ENCODE measurements at regions of chr11 and their contacts with region 1.

Region 1: GRCh38 chr11:72430741-72431570 is 3.4 kb downstream of the CLPB start:
- DNase-seq: no peak
- ATAC-seq: peak in 4 of 8 donors; percentile 12 to 37 (median 33)
- H3K4me3 ChIP-seq: no peak overlapping the region
- H3K27ac ChIP-seq: no peak overlapping the region
- H3K4me1 ChIP-seq: peaks cover 0 to 41% (median 21%) of the 10 kb centered on the region in 9 donors
- H3K27me3 ChIP-seq: no peaks in the 10 kb centered on the region
- CTCF ChIP-seq: peak; percentile 39 to 83 (median 75)

Region 2: DNA sequence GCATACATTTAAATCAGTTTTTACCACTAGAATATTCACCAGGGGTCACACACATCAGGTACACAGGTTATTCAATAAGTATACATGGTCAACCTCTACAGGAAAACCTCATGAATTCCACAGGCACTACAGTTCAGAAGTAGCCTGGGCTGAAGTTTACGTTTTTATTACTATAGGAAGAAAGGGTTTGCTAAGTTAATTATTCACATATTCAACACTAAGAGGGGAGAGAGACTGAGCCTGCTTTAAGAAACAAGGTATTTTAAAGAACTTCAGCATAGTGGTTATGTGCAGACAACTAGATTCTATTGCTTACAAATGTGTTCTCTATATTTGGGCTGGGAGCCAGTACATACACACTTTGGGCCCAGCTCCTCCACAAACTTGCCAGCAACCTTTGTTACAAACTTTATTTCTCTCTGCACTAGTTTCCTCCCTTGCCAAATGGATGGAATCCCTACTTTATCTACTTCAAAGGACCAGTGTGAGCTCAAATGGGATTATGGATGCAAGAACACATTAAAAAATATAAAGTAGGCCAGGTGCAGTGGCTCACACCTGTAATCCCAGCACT is 400.4 kb before region 1 on chr11:
- intact Hi-C with region 1: loop called in 1 of 10 experiments (anchors 10 kb)
- DNase-seq: no peak
- ATAC-seq: no peak
- H3K4me3 ChIP-seq: no peak overlapping the region
- H3K27ac ChIP-seq: no peak overlapping the region
- H3K4me1 ChIP-seq: peaks cover 5 to 95% (median 61%) of the 10 kb centered on the region in 9 donors
- H3K27me3 ChIP-seq: no peaks in the 10 kb centered on the region
- CTCF ChIP-seq: no peak

Region 3: DNA sequence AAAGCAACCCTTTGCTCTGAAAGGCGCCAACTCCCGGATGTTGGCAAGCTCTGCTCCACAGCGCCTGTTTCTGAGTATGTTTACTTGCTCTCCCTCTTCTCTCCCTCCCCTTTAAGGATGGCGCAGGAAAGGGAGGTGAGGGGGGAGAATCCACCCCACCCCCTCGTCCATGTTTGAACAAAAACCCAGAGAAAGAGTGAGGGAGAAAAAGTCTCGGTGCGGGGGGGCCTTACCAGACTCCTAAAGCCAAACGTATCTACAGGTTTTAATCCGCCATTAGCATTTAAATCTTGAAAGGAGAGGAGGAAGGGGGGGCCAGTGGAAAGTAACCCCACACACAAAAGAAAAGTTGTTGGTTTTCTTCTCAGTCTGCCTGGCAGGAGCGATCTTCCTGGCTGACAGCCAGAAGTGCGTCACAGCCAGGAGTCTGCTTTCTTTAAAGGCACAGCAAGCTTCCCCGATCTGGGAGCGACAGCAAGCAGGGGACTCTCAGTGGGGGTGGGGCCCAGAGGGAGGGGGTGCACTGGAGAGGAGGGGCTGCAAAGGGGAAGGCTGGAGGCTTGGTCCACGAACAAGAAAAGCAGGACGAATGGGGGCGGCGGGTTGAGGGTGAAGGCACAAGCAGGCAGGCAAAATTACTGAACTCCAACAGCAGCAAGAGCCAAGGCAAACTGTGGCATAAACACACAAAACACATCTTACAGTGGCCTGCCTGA is 390.1 kb before region 1 on chr11:
- intact Hi-C with region 1: no loop called
- DNase-seq: peak; percentile 95 to 96
- ATAC-seq: peak; percentile 82 to 91 (median 86)
- H3K4me3 ChIP-seq: peak overlapping the region; percentile 42 to 80 (median 64)
- H3K27ac ChIP-seq: peak overlapping the region; percentile 92 to 99 (median 96)
- H3K4me1 ChIP-seq: peaks cover 24 to 66% (median 54%) of the 10 kb centered on the region in 9 donors
- H3K27me3 ChIP-seq: no peaks in the 10 kb centered on the region
- CTCF ChIP-seq: no peak

Region 4: GRCh38 chr11:72112321-72113219 is 318.4 kb before region 1 on chr11 and contains the start of gene ANAPC15:
- intact Hi-C with region 1: loop called in 2 of 10 experiments (anchors 10 kb)
- DNase-seq: peak; percentile 93 to 100
- ATAC-seq: peak; percentile 94 to 98 (median 96)
- H3K4me3 ChIP-seq: peak within 1 kb of the TSS; percentile 37 to 84 (median 58)
- H3K27ac ChIP-seq: peak within 1 kb of the TSS; percentile 88 to 100 (median 96)
- H3K4me1 ChIP-seq: peaks cover 4 to 21% (median 15%) of the 10 kb centered on the region in 9 donors
- H3K27me3 ChIP-seq: peaks cover 0 to 10% (median 0%) of the 10 kb centered on the region in 7 donors
- CTCF ChIP-seq: peak in 2 of 9 donors; percentile 11 to 16
- total RNA-seq, gene ANAPC15: 31.8 to 58.3 (median 46.8) TPM

Region 5: DNA sequence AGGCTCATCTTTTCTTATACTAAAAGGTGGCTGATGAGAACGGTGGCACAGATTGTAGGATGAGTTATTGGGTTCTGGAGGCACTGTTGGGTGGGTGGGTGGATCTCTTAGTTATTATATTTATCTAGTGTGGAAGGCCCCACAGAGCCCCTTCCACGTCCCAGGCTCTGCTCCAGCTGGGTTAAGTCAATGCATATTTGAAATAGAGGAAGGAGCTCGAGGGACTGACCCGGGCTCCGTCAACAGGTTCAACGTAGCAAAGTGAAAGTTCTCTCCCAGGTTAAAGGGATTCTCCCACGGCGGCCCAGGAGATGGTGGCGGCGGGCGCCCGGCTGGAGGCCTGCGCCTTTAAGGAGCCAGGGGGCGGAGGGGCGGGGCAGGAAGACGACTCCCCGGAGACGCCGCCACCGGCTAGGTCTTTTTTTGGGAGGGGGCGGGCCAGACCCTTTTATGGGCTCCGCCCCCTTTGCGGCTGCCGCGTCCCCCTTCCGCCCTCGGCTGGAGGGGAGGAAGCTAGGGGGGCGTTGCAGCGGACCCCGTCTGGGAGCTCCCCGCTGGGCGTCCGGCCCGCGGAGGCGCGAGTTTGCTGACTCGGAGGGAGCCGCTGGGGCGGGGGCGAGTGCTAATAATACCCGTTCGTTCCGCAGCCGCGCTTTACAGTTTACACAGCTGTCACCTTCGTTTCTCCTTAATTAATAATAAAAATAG is 207.9 kb before region 1 on chr11:
- intact Hi-C with region 1: no loop called
- DNase-seq: peak; percentile 95 to 96
- ATAC-seq: peak; percentile 89 to 96 (median 93)
- H3K4me3 ChIP-seq: peak overlapping the region; percentile 57 to 94 (median 84)
- H3K27ac ChIP-seq: peak overlapping the region; percentile 94 to 100 (median 99)
- H3K4me1 ChIP-seq: peaks cover 5 to 55% (median 21%) of the 10 kb centered on the region in 9 donors
- H3K27me3 ChIP-seq: peaks cover 0 to 5% (median 0%) of the 10 kb centered on the region in 7 donors
- CTCF ChIP-seq: peak in 8 of 9 donors; percentile 21 to 67 (median 52)

Region 6: GRCh38 chr11:72238040-72238450 is 192.9 kb before region 1 on chr11:
- intact Hi-C with region 1: loop called in 1 of 10 experiments (anchors 5 kb)
- DNase-seq: peak in 1 of 2 donors; percentile 33
- ATAC-seq: peak; percentile 12 to 60 (median 34)
- H3K4me3 ChIP-seq: no peak overlapping the region
- H3K27ac ChIP-seq: no peak overlapping the region
- H3K4me1 ChIP-seq: peaks cover 10 to 58% (median 28%) of the 10 kb centered on the region in 9 donors
- H3K27me3 ChIP-seq: peaks cover 0 to 47% (median 28%) of the 10 kb centered on the region in 7 donors
- CTCF ChIP-seq: peak; percentile 41 to 77 (median 67)

Region 7: GRCh38 chr11:72352859-72353551 is 78.0 kb before region 1 on chr11:
- intact Hi-C with region 1: no loop called
- DNase-seq: peak in 1 of 2 donors; percentile 6
- ATAC-seq: peak in 3 of 8 donors; percentile 45 to 62 (median 47)
- H3K4me3 ChIP-seq: no peak overlapping the region
- H3K27ac ChIP-seq: no peak overlapping the region
- H3K4me1 ChIP-seq: peaks cover 0 to 27% (median 17%) of the 10 kb centered on the region in 9 donors
- H3K27me3 ChIP-seq: no peaks in the 10 kb centered on the region
- CTCF ChIP-seq: peak in 5 of 9 donors; percentile 9 to 43 (median 18)

Region 8: GRCh38 chr11:72598906-72599305 is 167.9 kb after region 1 on chr11:
- intact Hi-C with region 1: no loop called
- DNase-seq: peak; percentile 55 to 65
- ATAC-seq: peak; percentile 73 to 89 (median 86)
- H3K4me3 ChIP-seq: no peak overlapping the region
- H3K27ac ChIP-seq: no peak overlapping the region
- H3K4me1 ChIP-seq: peaks cover 0 to 8% (median 0%) of the 10 kb centered on the region in 9 donors
- H3K27me3 ChIP-seq: peaks cover 0 to 1% (median 0%) of the 10 kb centered on the region in 7 donors
- CTCF ChIP-seq: peak; percentile 31 to 79 (median 68)